ENCODE measurements at regions of chr4 and their contacts with region 1.

Region 1: GRCh38 chr4:174120446-174121295 is 162.8 kb downstream of the FBXO8 start:
- DNase-seq: no peak

Region 2: DNA sequence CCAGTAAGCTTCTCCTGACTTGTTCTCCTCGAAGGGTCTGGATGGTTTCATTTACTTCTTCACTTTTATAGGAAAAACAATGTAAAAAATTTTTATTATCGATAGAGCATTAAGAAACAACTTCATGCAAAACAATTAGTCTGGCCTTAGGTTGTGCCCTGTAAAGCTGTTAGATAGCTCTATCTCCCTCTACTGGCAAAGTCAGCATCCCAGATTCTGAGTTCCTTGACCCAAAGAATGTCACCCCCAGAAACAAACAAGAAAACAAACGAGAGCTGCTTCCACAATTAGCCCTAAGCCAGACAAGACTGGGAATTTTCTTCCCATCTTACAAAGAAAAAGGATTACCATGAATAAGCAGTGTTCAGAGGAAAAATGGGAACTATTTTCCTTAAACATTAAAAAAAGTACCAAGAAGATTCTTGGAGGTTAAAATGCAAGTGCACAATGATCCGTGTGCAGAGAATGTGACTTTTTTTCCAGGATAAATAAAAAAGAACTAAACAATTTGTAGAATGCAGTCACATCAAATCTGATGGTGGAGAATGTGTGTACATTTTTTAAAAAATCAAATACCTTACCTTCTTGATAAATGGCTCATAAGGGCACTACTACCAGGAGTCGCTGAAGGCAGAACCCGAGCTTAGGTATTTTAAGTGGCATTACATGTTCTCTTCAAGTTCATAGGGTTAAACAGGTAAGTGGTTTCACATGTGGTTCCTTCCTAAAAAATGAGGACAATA is 130.4 kb before region 1 on chr4:
- intact Hi-C with region 1: loop called (anchors 2 kb)
- DNase-seq: no peak

Measured in cardiac septum (tissue), 1 donor.